Naive thymus-derived CD8-positive, alpha-beta T cell (primary cell): ENCODE measurements at regions of chr15 and their contacts with region 1.

Region 1: GRCh38 chr15:63093486-63094205 is 28.0 kb upstream of the LACTB start:
- DNase-seq: peak; percentile 42 to 84 (median 58)
- ATAC-seq: peak; percentile 87 to 100
- H3K4me3 Mint-ChIP-seq: no peak overlapping the region
- H3K27ac Mint-ChIP-seq: peak overlapping the region in 2 of 10 donors; percentile 1
- H3K4me1 Mint-ChIP-seq: peaks cover 0 to 6% (median 2%) of the 10 kb centered on the region in 4 donors
- H3K27me3 Mint-ChIP-seq: peaks cover 0 to 1% (median 0%) of the 10 kb centered on the region in 5 donors

Region 2: GRCh38 chr15:63048115-63048775 is 45.4 kb before region 1 on chr15:
- POLR2A ChIA-PET with region 1: interaction called, 10 read pairs
- DNase-seq: peak; percentile 78 to 89 (median 85)
- ATAC-seq: peak; percentile 80 to 83
- H3K4me3 Mint-ChIP-seq: peak overlapping the region; percentile 83 to 97 (median 93)
- H3K27ac Mint-ChIP-seq: peak overlapping the region in 8 of 10 donors; percentile 59 to 87 (median 78)
- H3K4me1 Mint-ChIP-seq: peaks cover 10 to 36% (median 26%) of the 10 kb centered on the region in 4 donors
- H3K27me3 Mint-ChIP-seq: peaks cover 16 to 44% (median 30%) of the 10 kb centered on the region in 5 donors

Region 3: GRCh38 chr15:63079938-63080626 is 13.6 kb before region 1 on chr15:
- POLR2A ChIA-PET with region 1: no interaction called
- DNase-seq: no peak
- ATAC-seq: no peak
- H3K4me3 Mint-ChIP-seq: no peak overlapping the region
- H3K27ac Mint-ChIP-seq: no peak overlapping the region
- H3K4me1 Mint-ChIP-seq: peaks cover 0 to 2% (median 0%) of the 10 kb centered on the region in 4 donors
- H3K27me3 Mint-ChIP-seq: peaks cover 5 to 11% (median 8%) of the 10 kb centered on the region in 5 donors

Region 4: GRCh38 chr15:63135804-63136203 is 42.2 kb after region 1 on chr15:
- POLR2A ChIA-PET with region 1: no interaction called
- DNase-seq: no peak
- ATAC-seq: no peak
- H3K4me3 Mint-ChIP-seq: no peak overlapping the region
- H3K27ac Mint-ChIP-seq: peak overlapping the region in 1 of 10 donors; percentile 71
- H3K4me1 Mint-ChIP-seq: peaks cover 0 to 12% (median under 1%) of the 10 kb centered on the region in 4 donors
- H3K27me3 Mint-ChIP-seq: no peaks in the 10 kb centered on the region

Region 5: GRCh38 chr15:63234451-63234870 is 140.8 kb after region 1 on chr15:
- POLR2A ChIA-PET with region 1: no interaction called
- DNase-seq: no peak
- ATAC-seq: no peak
- H3K4me3 Mint-ChIP-seq: peak overlapping the region in 3 of 10 donors; percentile 10 to 17 (median 15)
- H3K27ac Mint-ChIP-seq: peak overlapping the region; percentile 2 to 86 (median 64)
- H3K4me1 Mint-ChIP-seq: peaks cover 17 to 79% (median 62%) of the 10 kb centered on the region in 4 donors
- H3K27me3 Mint-ChIP-seq: no peaks in the 10 kb centered on the region